BJ (cell line): ENCODE measurements at regions of chr20 and their contacts with region 1.

Region 1: DNA sequence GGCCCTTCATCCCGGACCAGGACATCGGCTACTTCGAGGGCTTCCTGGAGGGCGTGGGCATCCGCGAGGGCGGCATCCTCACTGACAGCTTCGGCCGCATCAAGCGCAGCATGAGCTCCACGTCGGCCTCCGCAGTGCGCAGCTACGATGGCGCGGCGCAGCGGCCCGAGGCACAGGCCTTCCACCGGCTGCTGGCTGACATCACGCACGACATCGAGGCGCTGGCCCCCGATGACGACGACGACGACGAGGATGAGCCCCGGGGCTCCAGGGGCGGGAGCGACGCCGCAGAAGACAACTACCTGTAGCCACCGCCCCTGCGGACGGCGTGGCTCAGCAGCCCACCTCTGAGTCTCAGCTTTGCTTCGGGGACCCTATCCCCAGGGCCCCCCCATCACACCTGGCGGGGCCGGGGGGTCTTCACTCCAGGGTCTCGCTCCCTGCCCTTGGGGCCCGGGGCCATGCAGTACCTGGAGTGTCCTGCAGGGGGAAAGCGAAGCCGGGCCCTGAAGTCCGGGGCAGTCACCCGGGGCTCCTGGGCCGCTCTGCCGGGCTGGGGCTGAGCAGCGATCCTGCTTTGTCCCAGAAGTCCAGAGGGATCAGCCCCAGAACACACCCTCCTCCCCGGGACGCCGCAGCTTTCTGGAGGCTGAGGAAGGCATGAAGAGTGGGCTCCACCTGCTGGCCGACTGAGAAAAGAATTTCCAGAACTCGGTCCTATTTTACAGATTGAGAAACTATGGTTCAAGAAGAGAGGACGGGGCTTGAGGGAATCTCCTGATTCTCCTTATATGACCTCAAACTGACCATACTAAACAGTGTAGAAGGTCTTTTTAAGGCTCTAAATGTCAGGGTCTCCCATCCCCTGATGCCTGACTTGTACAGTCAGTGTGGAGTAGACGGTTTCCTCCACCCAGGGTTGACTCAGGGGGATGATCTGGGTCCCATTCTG is 20.8 kb upstream of the HCK start:
- DNase-seq: peak; percentile 38
- H3K4me3 ChIP-seq: peak overlapping the region; percentile 19
- H3K27me3 ChIP-seq: peaks cover 37% of the 10 kb centered on the region
- CTCF ChIP-seq: peak; percentile 87

Region 2: GRCh38 chr20:31811796-31812728 is 219.2 kb before region 1 on chr20:
- CTCF ChIA-PET with region 1: interaction called, 19 read pairs
- POLR2A ChIA-PET with region 1: no interaction called
- DNase-seq: no peak
- H3K4me3 ChIP-seq: no peak overlapping the region
- H3K27me3 ChIP-seq: no peaks in the 10 kb centered on the region
- CTCF ChIP-seq: no peak

Region 3: GRCh38 chr20:31842471-31843157 is 188.7 kb before region 1 on chr20:
- CTCF ChIA-PET with region 1: interaction called, 18 read pairs
- POLR2A ChIA-PET with region 1: no interaction called
- DNase-seq: no peak
- H3K4me3 ChIP-seq: no peak overlapping the region
- H3K27me3 ChIP-seq: no peaks in the 10 kb centered on the region
- CTCF ChIP-seq: no peak

Region 4: DNA sequence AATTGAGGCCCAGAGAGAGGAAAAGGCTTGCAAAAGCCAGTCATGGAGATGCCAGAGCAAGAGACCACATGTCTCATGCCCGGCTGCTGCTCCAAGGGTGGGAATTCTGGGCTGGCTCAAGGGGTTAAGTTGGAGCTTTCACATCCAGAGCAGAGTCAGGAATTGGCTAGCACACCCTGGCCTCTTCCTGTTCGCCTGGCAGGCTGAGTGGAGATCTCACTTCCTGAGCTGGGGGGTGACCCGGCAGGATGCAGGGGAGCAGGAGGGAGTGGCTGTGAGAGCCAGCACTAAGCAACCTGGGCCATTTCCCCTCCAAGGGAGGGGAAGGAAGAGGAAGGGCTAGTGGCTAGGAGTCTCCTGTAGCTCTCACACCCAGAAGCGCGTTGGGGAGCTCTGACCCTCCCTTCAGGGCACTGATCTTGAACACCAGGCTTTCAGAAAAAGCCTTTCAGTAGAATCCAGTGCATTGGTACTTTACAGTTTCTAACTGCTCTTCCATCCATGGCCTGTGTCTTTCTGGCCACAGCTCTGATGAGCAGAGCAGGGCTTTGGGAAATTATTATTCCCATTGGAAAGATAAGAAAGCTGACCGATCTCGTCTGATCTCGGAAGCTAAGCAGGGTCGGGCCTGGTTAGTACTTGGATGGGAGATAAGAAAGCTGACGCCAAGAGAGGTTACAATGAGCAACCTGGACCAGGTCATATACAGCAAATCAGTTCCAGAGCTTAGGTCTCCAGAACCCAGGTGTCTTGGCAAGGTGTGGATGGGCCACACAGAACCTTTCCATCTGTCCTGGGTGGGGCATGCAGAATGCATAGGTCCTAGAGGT is 23.3 kb before region 1 on chr20:
- CTCF ChIA-PET with region 1: interaction called, 11 read pairs
- POLR2A ChIA-PET with region 1: no interaction called
- DNase-seq: no peak
- H3K4me3 ChIP-seq: no peak overlapping the region
- H3K27me3 ChIP-seq: peaks cover 8% of the 10 kb centered on the region
- CTCF ChIP-seq: no peak

Region 5: DNA sequence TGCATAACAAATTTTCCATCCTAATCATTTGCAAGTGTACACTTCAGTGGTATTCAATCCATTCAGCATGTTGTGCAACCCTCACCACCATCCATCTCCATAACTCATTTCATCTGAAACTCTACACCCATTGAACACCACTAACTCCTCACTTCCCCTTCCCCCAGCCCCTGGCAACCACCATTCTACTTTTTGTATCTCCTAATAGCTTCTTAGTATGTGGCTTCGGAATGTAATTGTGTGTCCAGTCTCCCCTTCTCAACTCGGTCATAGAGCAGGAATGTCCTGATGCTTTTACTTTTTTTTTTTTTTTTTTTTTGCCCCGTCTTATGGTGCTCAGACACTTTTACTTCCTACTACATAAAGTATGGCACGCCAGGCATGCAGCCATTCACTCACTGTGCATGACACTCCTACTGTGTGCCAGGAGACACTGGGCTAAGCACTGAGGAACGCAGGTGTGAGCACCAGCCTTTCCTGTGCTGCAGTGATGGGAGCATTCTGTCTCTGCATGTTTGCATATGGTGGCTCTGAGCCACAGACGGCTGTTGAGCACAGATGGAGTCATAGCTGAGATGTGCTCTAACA is 36.0 kb after region 1 on chr20:
- CTCF ChIA-PET with region 1: interaction called, 14 read pairs
- POLR2A ChIA-PET with region 1: no interaction called
- DNase-seq: peak; percentile 96
- H3K4me3 ChIP-seq: no peak overlapping the region
- H3K27me3 ChIP-seq: peaks cover under 1% of the 10 kb centered on the region; the same call in 1 of the 2 replicates
- CTCF ChIP-seq: no peak